Naive thymus-derived CD4-positive, alpha-beta T cell (primary cell): ENCODE measurements at regions of chr15 and their contacts with region 1.

Region 1: GRCh38 chr15:41180206-41180789 is 50.3 kb downstream of the EXD1 start:
- DNase-seq: no peak
- ATAC-seq: no peak
- H3K4me3 ChIP-seq: no peak overlapping the region
- H3K4me3 Mint-ChIP-seq: no peak overlapping the region
- H3K27ac ChIP-seq: no peak overlapping the region
- H3K27ac Mint-ChIP-seq: no peak overlapping the region
- H3K4me1 ChIP-seq: no peaks in the 10 kb centered on the region
- H3K4me1 Mint-ChIP-seq: peaks cover 0 to 2% (median 0%) of the 10 kb centered on the region in 7 donors
- H3K27me3 ChIP-seq: no peaks in the 10 kb centered on the region
- H3K27me3 Mint-ChIP-seq: peaks cover 0 to 17% (median 0%) of the 10 kb centered on the region in 5 donors

Region 2: DNA sequence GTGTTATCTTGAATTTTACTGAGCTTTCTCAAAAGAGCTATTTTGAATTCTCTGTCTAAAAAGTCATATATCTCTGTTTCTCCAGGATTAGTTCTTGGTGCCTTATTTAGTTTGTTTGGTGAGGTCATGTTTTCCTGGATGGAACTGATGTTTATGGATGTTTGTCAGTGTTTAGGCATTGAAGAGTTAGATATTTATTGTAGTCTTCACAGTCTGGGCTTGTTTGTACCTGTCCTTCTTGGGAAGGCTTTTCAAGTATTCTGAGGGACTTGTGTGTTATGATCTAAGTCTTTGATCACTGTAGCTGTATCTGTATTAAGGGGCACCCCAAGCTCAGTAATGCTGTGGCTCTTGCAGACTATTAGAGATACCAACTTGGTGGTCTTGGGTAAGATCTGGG is 495.9 kb before region 1 on chr15:
- CTCF ChIA-PET with region 1: no interaction called
- POLR2A ChIA-PET with region 1: no interaction called
- intact Hi-C with region 1: loop called in 1 of 2 experiments (anchors 5 kb)
- DNase-seq: no peak
- ATAC-seq: no peak
- H3K4me3 ChIP-seq: no peak overlapping the region
- H3K4me3 Mint-ChIP-seq: no peak overlapping the region
- H3K27ac ChIP-seq: no peak overlapping the region
- H3K27ac Mint-ChIP-seq: peak overlapping the region in 3 of 9 donors; percentile 41 to 57 (median 47)
- H3K4me1 ChIP-seq: no peaks in the 10 kb centered on the region
- H3K4me1 Mint-ChIP-seq: peaks cover 0 to under 1% (median 0%) of the 10 kb centered on the region in 7 donors
- H3K27me3 ChIP-seq: no peaks in the 10 kb centered on the region
- H3K27me3 Mint-ChIP-seq: peaks cover 0 to 3% (median 0%) of the 10 kb centered on the region in 5 donors

Region 3: DNA sequence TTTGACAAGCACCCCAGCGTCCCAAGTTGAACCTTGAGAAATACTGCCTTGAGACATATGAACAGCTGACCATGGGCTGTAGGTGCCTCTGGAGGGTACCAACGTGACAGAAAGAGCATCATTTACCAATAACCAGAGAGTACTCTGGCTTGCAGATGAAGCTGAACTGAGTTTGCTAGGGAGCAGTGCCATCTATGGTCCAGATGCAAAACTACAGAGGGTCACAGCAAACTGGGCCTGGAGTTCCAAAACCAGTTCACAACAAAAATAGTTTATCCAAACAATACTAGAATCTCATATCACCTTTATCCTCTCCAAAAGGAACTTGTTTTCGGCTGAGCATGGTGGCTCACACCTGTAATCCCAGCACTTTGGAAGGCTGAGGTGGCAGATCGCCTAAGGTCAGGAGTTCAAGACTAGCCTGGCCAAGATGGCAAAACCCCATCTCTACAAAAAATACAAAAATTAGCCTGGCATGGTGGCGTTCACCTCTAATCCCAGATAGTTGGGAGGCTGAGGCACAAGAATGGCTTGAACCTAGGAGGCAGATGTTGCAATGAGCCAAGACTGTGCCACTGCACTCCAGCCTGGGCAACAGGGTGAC is 157.7 kb before region 1 on chr15:
- CTCF ChIA-PET with region 1: no interaction called
- POLR2A ChIA-PET with region 1: no interaction called
- intact Hi-C with region 1: loop called in 1 of 2 experiments (anchors 2 kb)
- DNase-seq: peak; percentile 9 to 50 (median 34)
- ATAC-seq: peak; percentile 68
- H3K4me3 ChIP-seq: no peak overlapping the region
- H3K4me3 Mint-ChIP-seq: no peak overlapping the region
- H3K27ac ChIP-seq: no peak overlapping the region
- H3K27ac Mint-ChIP-seq: peak overlapping the region in 1 of 9 donors; percentile 41
- H3K4me1 ChIP-seq: no peaks in the 10 kb centered on the region
- H3K4me1 Mint-ChIP-seq: peaks cover 3 to 14% (median 7%) of the 10 kb centered on the region in 7 donors
- H3K27me3 ChIP-seq: no peaks in the 10 kb centered on the region
- H3K27me3 Mint-ChIP-seq: no peaks in the 10 kb centered on the region

Region 4: DNA sequence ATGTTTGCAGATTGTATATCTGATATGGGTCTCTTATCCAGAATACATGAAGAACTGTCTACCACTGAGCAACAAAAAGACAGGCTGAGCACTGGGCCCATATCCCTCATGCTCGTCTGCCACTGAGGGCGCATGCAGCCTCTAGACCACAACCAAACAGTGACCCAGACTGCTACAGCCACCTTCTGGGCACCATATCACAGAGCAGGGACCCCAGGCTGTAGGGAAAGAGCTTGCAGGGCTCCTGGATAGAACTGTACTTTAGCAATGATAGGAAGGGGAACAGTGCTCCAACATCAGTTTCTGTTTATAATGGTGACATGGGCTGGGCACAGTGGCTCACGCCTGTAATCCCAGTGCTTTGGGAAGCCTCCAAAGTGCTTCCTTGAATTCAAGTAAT is 1133.2 kb after region 1 on chr15:
- CTCF ChIA-PET with region 1: no interaction called
- POLR2A ChIA-PET with region 1: no interaction called
- intact Hi-C with region 1: no loop called
- DNase-seq: no peak
- ATAC-seq: no peak
- H3K4me3 ChIP-seq: no peak overlapping the region
- H3K4me3 Mint-ChIP-seq: no peak overlapping the region
- H3K27ac ChIP-seq: no peak overlapping the region
- H3K27ac Mint-ChIP-seq: peak overlapping the region in 1 of 9 donors; percentile 57
- H3K4me1 ChIP-seq: no peaks in the 10 kb centered on the region
- H3K4me1 Mint-ChIP-seq: no peaks in the 10 kb centered on the region
- H3K27me3 ChIP-seq: no peaks in the 10 kb centered on the region
- H3K27me3 Mint-ChIP-seq: no peaks in the 10 kb centered on the region